ENCODE measurements at regions of chr15 and their contacts with region 1.

Region 1: GRCh38 chr15:67784090-67784781 is 41.1 kb upstream of the SKOR1 start:
- DNase-seq: peak; percentile 99
- H3K4me3 ChIP-seq: peak overlapping the region; percentile 68
- H3K27ac ChIP-seq: peak overlapping the region; percentile 96
- H3K4me1 ChIP-seq: peaks cover 91% of the 10 kb centered on the region
- CTCF ChIP-seq: peak; percentile 24; the same call in 1 of the 2 replicates

Region 2: GRCh38 chr15:67080900-67081431 is 703.3 kb before region 1 on chr15:
- CTCF ChIA-PET with region 1: no interaction called
- POLR2A ChIA-PET with region 1: interaction called, 4 read pairs
- intact Hi-C with region 1: loop called (anchors 5 kb)
- DNase-seq: peak; percentile 98
- H3K4me3 ChIP-seq: peak overlapping the region; percentile 54
- H3K27ac ChIP-seq: peak overlapping the region; percentile 99
- H3K4me1 ChIP-seq: peaks cover 97% of the 10 kb centered on the region
- CTCF ChIP-seq: peak; percentile 82

Region 3: GRCh38 chr15:67501177-67501835 is 282.9 kb before region 1 on chr15:
- CTCF ChIA-PET with region 1: no interaction called
- POLR2A ChIA-PET with region 1: interaction called, 3 read pairs
- intact Hi-C with region 1: loop called (anchors 1 kb)
- DNase-seq: peak; percentile 57
- H3K4me3 ChIP-seq: no peak overlapping the region
- H3K27ac ChIP-seq: no peak overlapping the region
- H3K4me1 ChIP-seq: peaks cover 25% of the 10 kb centered on the region
- CTCF ChIP-seq: peak; percentile 81

Region 4: GRCh38 chr15:67542420-67543347 is 241.6 kb before region 1 on chr15 and contains the start of gene MAP2K5:
- CTCF ChIA-PET with region 1: no interaction called
- POLR2A ChIA-PET with region 1: interaction called, 3 read pairs
- intact Hi-C with region 1: loop called (anchors 1 kb)
- DNase-seq: peak; percentile 83
- H3K4me3 ChIP-seq: peak within 1 kb of the TSS; percentile 81
- H3K27ac ChIP-seq: peak within 1 kb of the TSS; percentile 77
- H3K4me1 ChIP-seq: peaks cover 59% of the 10 kb centered on the region
- CTCF ChIP-seq: no peak
- total RNA-seq, gene MAP2K5: 9.0 and 10.2 TPM in 2 replicates

Region 5: GRCh38 chr15:67833710-67834511 is 49.7 kb after region 1 on chr15:
- CTCF ChIA-PET with region 1: interaction called, 6 read pairs
- POLR2A ChIA-PET with region 1: interaction called, 8 read pairs
- intact Hi-C with region 1: loop called (anchors 1 kb)
- DNase-seq: peak; percentile 64
- H3K4me3 ChIP-seq: peak overlapping the region; percentile 52
- H3K27ac ChIP-seq: no peak overlapping the region
- H3K4me1 ChIP-seq: peaks cover 60% of the 10 kb centered on the region
- CTCF ChIP-seq: peak; percentile 77

Region 6: GRCh38 chr15:68187559-68187958 is 403.3 kb after region 1 on chr15:
- CTCF ChIA-PET with region 1: no interaction called
- POLR2A ChIA-PET with region 1: no interaction called
- intact Hi-C with region 1: loop called (anchors 5 kb)
- DNase-seq: peak; percentile 49
- H3K4me3 ChIP-seq: no peak overlapping the region
- H3K27ac ChIP-seq: peak overlapping the region; percentile 97
- H3K4me1 ChIP-seq: peaks cover 70% of the 10 kb centered on the region
- CTCF ChIP-seq: no peak

Region 7: GRCh38 chr15:68277603-68278344 is 493.5 kb after region 1 on chr15 and contains the start of gene FEM1B:
- CTCF ChIA-PET with region 1: no interaction called
- POLR2A ChIA-PET with region 1: no interaction called
- intact Hi-C with region 1: loop called (anchors 5 kb)
- DNase-seq: peak; percentile 90
- H3K4me3 ChIP-seq: peak within 1 kb of the TSS; percentile 82
- H3K27ac ChIP-seq: peak within 1 kb of the TSS; percentile 79
- H3K4me1 ChIP-seq: peaks cover 33% of the 10 kb centered on the region
- CTCF ChIP-seq: no peak
- total RNA-seq, gene FEM1B: 35.5 and 37.1 TPM in 2 replicates